ENCODE measurements at regions of chr11 and their contacts with region 1.

Region 1: GRCh38 chr11:47454180-47454644 is 5.3 kb upstream of the RAPSN start:
- DNase-seq: peak; percentile 73 to 85
- ATAC-seq: peak; percentile 68 to 84 (median 80)
- H3K4me3 ChIP-seq: no peak overlapping the region
- H3K27ac ChIP-seq: no peak overlapping the region
- H3K4me1 ChIP-seq: peaks cover 4% of the 10 kb centered on the region
- H3K27me3 ChIP-seq: no peaks in the 10 kb centered on the region
- CTCF ChIP-seq: peak; percentile 80

Region 2: DNA sequence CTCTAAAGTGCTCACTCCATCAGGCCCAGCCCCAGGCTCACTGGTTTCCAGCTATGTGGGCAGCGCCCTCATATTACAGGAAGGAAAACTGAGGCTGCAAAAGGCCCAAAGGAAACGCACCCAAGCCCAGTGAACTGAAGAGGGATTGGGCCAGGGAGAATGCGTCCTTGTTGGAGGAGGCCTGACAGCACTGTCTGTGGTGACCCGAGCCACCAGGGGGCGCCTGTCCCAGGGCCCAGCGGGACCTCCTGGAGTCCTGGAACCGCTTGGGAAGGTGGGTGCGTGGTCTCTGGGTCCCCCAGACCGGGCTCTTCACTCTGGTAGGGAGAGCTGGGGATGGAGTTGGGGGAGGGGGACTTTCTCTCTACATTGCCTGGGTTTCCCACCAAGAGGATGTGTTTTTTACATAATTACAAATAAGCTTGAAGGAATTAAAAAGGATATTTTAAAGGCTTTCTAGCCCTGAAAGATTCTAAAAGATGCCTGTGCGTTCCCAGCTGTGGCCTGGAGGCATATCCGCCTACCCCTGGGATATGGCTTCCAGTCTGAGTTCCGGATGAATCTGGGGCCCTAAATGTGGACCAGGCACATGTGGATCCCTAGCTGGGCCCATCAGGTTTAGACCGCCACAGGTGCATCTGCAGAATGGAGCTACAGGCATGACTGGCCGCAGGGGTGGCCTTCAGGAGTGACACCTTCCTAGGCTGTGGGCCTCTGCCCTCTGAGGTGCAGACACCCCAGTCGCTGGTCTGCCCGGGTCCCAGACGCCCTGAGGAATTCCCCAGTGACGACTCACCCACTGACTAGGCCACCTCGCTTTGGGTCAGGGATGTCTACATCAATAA is 80.1 kb before region 1 on chr11:
- intact Hi-C with region 1: loop called (anchors 1 to 2 kb)
- DNase-seq: peak; percentile 87 to 92
- ATAC-seq: peak; percentile 89 to 96 (median 92)
- H3K4me3 ChIP-seq: peak overlapping the region; percentile 11
- H3K27ac ChIP-seq: no peak overlapping the region
- H3K4me1 ChIP-seq: no peaks in the 10 kb centered on the region
- H3K27me3 ChIP-seq: no peaks in the 10 kb centered on the region
- CTCF ChIP-seq: peak; percentile 92

Region 3: GRCh38 chr11:47411884-47412746 is 42.1 kb before region 1 on chr11:
- intact Hi-C with region 1: no loop called
- DNase-seq: peak; percentile 63 to 82
- ATAC-seq: no peak
- H3K4me3 ChIP-seq: no peak overlapping the region
- H3K27ac ChIP-seq: no peak overlapping the region
- H3K4me1 ChIP-seq: peaks cover 43% of the 10 kb centered on the region
- H3K27me3 ChIP-seq: no peaks in the 10 kb centered on the region
- CTCF ChIP-seq: peak; percentile 64

Measured in psoas muscle (tissue), 8 donors.